ENCODE measurements at regions of chr20 and their contacts with region 1.

Region 1: DNA sequence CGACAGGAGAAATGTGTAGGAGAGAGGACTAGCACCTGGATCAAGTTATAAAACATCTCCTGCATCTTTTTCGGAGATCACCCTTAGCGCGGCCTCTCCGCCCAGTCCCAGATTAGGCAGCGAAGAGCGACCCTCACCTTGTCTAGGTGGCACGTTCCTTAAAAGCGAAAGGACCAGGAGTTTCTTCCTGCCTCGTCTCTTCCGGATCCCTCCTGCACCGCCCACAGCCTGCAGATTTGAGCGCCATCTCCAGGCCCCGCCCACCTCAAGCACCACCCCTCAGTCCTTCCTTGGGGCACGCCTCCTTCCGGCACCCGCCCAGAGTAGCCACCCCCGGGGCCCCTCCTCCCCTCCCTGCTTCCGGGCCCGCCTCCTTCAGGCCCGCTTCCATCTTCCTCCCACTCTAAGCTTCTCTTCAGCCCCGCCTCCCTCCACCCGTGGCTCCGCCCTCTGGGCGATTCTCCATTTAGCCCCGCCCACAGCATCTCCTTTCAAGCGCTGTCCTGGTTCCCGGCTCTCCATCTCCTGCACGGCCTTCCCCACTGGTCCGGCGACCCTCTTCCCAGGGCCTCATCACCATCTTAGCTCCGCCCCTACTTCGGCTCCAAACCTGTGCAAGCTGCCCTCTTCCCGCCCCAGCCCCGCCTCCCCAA is 662 bp upstream of the RALY start:
- DNase-seq: peak; percentile 99 to 100 (median 100)

Region 2: GRCh38 chr20:33875055-33875454 is 118.0 kb before region 1 on chr20:
- intact Hi-C with region 1: no loop called
- DNase-seq: peak in 2 of 10 donors; percentile 26 to 32

Region 3: DNA sequence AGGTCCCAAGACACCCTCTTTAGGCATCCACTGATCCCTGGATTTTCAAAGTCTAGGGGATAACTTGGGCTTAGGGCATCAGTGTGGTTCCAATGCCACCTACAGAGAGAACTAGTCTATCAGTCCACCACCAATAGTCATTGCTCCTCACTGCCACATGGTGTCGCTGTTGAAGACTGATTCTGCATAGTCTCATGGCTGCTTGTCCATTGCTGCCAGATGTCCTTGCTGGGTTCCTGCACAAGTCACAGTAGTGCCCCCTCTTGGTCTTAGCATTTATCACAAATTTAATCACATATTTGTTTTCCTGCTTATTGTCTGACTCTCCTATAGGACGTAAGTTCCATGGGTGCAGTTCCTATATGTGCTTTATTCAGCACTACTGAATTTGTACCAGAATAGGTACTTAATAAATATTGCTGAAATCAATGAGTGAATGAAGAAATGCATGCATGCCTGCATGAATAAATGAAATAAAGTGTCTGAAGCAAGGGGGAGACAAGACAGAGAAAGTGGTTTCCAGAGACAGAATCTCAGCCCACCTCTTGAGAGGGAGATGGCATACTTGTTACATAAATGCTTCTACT is 45.2 kb before region 1 on chr20:
- intact Hi-C with region 1: loop called (anchors 5 kb)
- DNase-seq: no peak

Region 4: GRCh38 chr20:34069341-34070078 is 76.5 kb after region 1 on chr20:
- intact Hi-C with region 1: loop called (anchors 1 kb)
- DNase-seq: peak; percentile 50 to 97 (median 80)

Region 5: GRCh38 chr20:34111702-34112599 is 118.9 kb after region 1 on chr20 and contains the start of gene EIF2S2:
- intact Hi-C with region 1: loop called (anchors 2 kb)
- DNase-seq: peak; percentile 86 to 99 (median 89)